Endothelial cell of umbilical vein (primary cell): ENCODE measurements at regions of chr7 and their contacts with region 1.

Region 1: GRCh38 chr7:116696707-116697106 is 24.7 kb downstream of the MET start:
- DNase-seq: no peak
- H3K4me3 ChIP-seq: no peak overlapping the region
- H3K27ac ChIP-seq: no peak overlapping the region
- H3K4me1 ChIP-seq: peaks cover 36% of the 10 kb centered on the region
- H3K27me3 ChIP-seq: no peaks in the 10 kb centered on the region
- CTCF ChIP-seq: no peak
- POLR2A ChIP-seq: no peak

Region 2: GRCh38 chr7:116653204-116653603 is 43.5 kb before region 1 on chr7:
- CTCF ChIA-PET with region 1: no interaction called
- POLR2A ChIA-PET with region 1: no interaction called
- dilution Hi-C with region 1: no loop called
- intact Hi-C with region 1: loop called (anchors 1 kb)
- DNase-seq: no peak
- H3K4me3 ChIP-seq: no peak overlapping the region
- H3K27ac ChIP-seq: no peak overlapping the region
- H3K4me1 ChIP-seq: no peaks in the 10 kb centered on the region
- H3K27me3 ChIP-seq: no peaks in the 10 kb centered on the region
- CTCF ChIP-seq: no peak
- POLR2A ChIP-seq: no peak